PC-9 (cell line): ENCODE measurements at regions of chr4 and their contacts with region 1.

Region 1: DNA sequence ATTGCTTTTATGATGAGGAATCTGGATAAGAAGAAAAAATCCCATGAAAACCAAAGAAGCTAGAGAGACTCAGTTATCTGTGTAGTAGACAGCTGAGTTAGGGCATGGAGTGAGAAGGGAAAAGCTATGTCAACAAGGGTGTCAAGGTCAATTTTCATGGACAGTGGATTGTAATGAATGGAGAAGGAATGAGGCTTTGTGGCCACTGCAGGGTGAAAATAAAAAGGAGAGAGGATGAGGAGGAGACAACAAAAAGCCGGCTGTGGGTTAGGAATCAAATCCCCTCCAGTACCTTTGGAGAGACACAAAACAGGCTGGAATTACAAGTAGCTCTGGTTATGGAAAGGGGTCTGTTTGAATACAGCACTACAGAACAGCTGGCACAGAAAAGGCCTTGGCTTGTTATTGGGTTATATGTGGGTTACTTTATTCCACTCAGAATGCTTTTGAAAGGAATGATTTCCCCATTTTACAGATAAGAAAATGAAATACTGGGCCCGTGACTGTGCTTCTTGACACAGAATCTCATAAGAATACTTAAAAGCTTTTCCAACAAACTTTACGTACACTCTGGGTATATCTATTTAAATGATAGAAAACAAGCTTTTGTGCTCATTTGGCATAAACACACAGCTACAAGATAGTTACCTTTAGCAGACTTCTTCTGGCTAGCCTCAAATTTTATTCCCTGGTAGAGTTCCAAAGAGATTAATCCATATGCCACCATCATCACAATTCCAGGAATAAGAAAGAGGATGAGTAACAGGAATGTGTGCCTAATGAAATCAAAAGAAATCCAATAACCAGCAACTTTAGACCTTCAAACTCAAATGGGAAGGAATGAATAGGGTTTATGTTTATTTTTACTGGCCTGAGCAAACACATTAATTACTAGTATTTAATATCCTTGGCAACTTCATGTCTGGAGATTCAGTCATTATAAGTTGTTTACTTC is 7.5 kb downstream of the CCKAR start:
- DNase-seq: no peak
- H3K4me3 ChIP-seq: no peak overlapping the region
- H3K27ac ChIP-seq: no peak overlapping the region
- H3K4me1 ChIP-seq: no peaks in the 10 kb centered on the region
- H3K27me3 ChIP-seq: 0 out of 2 replicates have a peak, but pooled peaks cover 3% of the 10 kb centered on the region
- CTCF ChIP-seq: no peak

Region 2: GRCh38 chr4:26462874-26463273 is 19.9 kb before region 1 on chr4:
- CTCF ChIA-PET with region 1: no interaction called
- POLR2A ChIA-PET with region 1: no interaction called
- intact Hi-C with region 1: no loop called
- DNase-seq: no peak
- H3K4me3 ChIP-seq: no peak overlapping the region
- H3K27ac ChIP-seq: no peak overlapping the region
- H3K4me1 ChIP-seq: no peaks in the 10 kb centered on the region
- H3K27me3 ChIP-seq: 0 out of 2 replicates have a peak, but pooled peaks cover 6% of the 10 kb centered on the region
- CTCF ChIP-seq: no peak

Region 3: DNA sequence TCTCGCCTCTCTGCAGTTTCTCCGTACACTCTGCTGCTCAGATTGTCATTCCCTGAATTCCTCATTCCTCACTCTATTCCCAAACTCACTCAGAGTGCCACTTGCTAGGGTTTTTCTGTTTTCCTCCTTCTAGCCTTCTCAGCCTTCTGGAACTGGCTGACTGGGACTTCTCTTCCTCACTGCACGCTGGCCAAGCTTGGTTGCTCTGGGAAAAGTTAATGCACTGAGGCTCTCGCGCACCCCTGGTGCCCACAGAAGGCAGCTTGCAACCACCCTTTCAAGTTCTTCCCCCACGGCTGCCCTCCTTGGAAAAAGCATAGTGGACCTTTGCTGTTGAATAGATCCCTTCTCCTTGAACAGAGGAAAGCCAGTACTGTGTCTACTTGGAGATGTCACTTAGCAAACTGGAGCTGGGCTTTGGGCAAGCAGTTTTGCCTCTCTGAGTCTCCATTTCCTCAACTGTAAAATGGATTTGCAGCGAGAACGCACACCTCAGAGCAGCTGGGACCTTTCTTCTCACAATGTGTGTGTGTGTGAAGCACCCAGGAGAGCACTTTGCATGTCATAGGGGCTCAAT is 13.5 kb after region 1 on chr4:
- CTCF ChIA-PET with region 1: no interaction called
- POLR2A ChIA-PET with region 1: interaction called, 10 read pairs
- intact Hi-C with region 1: no loop called
- DNase-seq: no peak
- H3K4me3 ChIP-seq: no peak overlapping the region
- H3K27ac ChIP-seq: no peak overlapping the region
- H3K4me1 ChIP-seq: no peaks in the 10 kb centered on the region
- H3K27me3 ChIP-seq: peaks cover 7% of the 10 kb centered on the region
- CTCF ChIP-seq: no peak